Activated naive CD4-positive, alpha-beta T cell treated with anti-CD3 and anti-CD28 coated beads for 36 hours (primary cell): ENCODE measurements at regions of chr9 and their contacts with region 1.

Region 1: GRCh38 chr9:94014065-94014654 is 59.0 kb upstream of the BARX1 start:
- DNase-seq: no peak
- H3K4me3 Mint-ChIP-seq: no peak overlapping the region
- H3K27ac Mint-ChIP-seq: no peak overlapping the region
- H3K4me1 Mint-ChIP-seq: peaks cover 17% of the 10 kb centered on the region
- H3K27me3 Mint-ChIP-seq: no peaks in the 10 kb centered on the region

Region 2: DNA sequence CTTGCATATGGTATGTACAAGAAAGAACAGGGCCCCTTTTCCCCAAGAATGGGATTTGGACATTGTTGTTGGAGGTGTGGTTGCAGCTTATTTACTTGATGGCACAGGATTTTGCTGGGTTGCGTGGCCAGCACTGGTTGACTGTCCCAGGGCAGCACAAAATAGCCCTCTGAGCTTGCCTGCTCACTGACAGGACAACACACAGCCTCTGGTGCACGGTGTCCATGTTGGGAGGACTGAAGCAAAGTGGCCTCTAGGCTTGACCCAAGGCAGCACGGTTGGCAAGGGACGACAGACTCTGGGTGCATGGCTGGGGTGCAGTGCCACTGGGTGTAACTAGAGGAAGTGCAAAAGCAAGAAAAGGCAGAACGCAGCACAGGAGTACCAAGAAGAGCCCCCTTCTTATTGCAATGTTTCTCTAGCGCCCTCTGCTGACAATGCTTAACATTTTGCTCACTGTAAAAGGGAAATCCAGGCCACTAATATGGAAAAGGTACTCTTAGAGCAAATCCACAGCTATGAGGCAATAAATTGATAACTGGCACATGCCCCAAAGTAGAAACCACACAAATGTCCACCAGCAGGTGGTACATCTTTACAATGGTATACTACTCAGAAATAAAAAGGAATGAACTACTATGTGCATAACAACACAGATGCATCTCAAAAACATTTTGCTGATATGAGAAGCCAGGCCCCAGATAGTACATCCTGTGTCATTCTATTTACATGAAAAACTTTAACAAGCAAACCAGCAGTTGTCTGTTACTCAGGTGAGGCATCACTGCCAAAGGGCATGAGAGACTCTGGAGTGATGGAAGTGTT is 11.6 kb before region 1 on chr9:
- CTCF ChIA-PET with region 1: interaction called, 42 read pairs
- intact Hi-C with region 1: no loop called
- DNase-seq: peak; percentile 60
- H3K4me3 Mint-ChIP-seq: no peak overlapping the region
- H3K27ac Mint-ChIP-seq: no peak overlapping the region
- H3K4me1 Mint-ChIP-seq: no peaks in the 10 kb centered on the region
- H3K27me3 Mint-ChIP-seq: no peaks in the 10 kb centered on the region

Region 3: GRCh38 chr9:94213511-94214124 is 199.5 kb after region 1 on chr9:
- CTCF ChIA-PET with region 1: interaction called, 66 read pairs
- intact Hi-C with region 1: loop called (anchors 1 kb)
- DNase-seq: peak; percentile 83
- H3K4me3 Mint-ChIP-seq: no peak overlapping the region
- H3K27ac Mint-ChIP-seq: no peak overlapping the region
- H3K4me1 Mint-ChIP-seq: peaks cover 3% of the 10 kb centered on the region
- H3K27me3 Mint-ChIP-seq: peaks cover 27% of the 10 kb centered on the region